BJ (cell line): ENCODE measurements at regions of chr6 and their contacts with region 1.

Region 1: DNA sequence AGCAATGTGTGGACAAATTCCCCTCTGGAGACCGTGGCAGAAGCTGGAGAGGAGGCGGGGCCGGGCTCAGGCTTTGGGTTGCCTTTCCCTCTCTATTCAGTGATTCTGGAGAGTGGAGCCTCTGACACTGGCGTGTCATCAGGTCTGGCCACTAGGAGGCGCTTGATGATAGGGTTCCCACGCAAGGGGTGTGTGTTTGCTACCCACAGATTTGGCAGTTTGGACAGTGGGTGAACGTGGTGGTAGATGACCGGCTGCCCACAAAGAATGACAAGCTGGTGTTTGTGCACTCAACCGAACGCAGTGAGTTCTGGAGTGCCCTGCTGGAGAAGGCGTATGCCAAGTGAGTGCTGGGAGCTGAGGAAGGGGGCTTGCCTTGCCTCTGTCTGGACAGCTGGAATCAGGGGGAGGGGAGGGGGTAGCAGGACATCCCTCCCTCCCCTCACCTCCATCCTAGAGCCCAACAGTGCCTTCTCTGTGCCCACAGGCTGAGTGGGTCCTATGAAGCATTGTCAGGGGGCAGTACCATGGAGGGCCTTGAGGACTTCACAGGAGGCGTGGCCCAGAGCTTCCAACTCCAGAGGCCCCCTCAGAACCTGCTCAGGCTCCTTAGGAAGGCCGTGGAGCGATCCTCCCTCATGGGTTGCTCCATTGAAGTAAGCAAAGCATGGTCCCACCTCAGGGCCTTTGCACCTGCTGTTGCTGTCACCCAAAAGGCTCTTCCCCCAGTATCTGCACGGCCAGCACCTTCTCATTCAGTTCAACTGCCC is 14.3 kb downstream of the CAPN11 start:
- DNase-seq: peak; percentile 12
- H3K4me3 ChIP-seq: no peak overlapping the region
- H3K27me3 ChIP-seq: peaks cover 3% of the 10 kb centered on the region; the same call in 1 of the 2 replicates
- CTCF ChIP-seq: peak; percentile 93

Region 2: DNA sequence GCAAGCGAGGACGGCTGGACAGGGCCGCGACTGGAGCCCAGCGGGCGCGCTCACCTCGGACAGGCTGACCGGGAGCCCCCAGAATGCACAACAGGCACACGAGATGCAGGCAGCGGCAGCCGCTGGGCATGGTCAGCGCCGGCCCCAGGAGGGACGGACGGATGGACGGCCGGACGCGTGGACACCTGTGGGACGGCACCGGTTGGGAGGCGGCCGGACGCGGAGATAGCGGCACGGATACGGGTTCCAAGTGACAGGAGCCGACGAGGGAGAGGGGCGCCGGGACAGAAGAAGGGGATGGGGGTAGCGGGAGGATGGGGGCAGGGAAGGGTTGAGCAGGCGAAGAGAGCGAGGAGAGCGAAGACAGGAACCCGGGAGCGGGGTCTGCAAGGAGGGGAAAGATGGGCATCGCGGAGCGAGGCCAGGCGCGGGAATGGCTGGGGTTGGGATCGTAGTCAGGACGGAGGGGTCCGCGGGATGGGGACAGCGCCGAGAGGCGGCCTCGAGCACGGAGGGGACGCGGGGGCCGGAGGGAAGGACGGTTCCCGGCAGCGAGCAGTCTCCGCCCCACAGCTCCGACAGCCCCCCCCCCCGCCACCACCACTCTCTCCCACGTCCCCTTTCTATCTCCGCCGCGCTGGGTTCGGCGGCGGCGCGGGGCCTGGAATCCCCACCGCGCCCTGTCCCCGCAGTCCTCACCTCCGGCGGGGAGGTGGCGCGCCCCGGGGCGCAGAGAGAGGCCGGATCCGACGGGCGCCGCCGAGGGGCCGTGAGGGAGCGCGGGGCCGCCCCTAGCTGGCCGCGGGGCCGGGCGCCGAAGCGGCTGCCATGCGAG is 718.0 kb before region 1 on chr6:
- CTCF ChIA-PET with region 1: no interaction called
- POLR2A ChIA-PET with region 1: interaction called, 14 read pairs
- DNase-seq: no peak
- H3K4me3 ChIP-seq: peak overlapping the region; percentile 62
- H3K27me3 ChIP-seq: 0 out of 2 replicates have a peak, but pooled peaks cover 2% of the 10 kb centered on the region
- CTCF ChIP-seq: no peak

Region 3: DNA sequence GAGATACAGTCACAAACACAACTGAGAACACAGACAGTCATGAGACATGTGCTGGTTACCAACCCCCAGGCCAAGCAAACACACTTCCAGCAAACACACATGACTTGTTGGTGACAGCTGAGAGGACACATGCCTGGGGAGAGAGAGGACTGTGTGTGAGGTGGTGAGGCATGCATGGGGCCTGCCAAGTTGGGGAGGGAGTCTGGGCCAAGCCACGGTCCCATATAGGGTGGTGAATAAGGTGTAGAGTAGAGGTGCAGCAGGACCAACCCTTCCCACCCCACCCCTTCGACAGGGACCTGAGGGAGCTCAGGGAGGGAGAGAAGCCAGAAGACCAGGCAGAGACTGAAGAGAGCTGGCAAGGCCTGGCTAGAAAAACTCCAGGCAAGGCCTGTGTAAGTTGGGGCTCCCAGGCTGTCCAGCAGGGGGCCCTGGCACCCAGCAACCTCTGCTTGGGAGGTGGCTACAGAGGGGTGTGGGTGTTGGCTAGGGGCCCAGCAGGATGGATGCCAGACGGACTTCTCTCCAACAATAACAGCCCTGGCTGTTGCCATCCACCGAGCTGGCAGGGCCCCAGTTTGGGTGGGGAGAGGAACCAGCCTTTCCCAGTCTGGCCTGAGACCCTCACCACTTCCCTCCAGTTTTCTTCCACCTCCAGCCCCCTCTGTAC is 48.5 kb after region 1 on chr6:
- CTCF ChIA-PET with region 1: interaction called, 10 read pairs
- POLR2A ChIA-PET with region 1: no interaction called
- DNase-seq: no peak
- H3K4me3 ChIP-seq: no peak overlapping the region
- H3K27me3 ChIP-seq: peaks cover 1% of the 10 kb centered on the region; the same call in 1 of the 2 replicates
- CTCF ChIP-seq: peak; percentile 91

Region 4: DNA sequence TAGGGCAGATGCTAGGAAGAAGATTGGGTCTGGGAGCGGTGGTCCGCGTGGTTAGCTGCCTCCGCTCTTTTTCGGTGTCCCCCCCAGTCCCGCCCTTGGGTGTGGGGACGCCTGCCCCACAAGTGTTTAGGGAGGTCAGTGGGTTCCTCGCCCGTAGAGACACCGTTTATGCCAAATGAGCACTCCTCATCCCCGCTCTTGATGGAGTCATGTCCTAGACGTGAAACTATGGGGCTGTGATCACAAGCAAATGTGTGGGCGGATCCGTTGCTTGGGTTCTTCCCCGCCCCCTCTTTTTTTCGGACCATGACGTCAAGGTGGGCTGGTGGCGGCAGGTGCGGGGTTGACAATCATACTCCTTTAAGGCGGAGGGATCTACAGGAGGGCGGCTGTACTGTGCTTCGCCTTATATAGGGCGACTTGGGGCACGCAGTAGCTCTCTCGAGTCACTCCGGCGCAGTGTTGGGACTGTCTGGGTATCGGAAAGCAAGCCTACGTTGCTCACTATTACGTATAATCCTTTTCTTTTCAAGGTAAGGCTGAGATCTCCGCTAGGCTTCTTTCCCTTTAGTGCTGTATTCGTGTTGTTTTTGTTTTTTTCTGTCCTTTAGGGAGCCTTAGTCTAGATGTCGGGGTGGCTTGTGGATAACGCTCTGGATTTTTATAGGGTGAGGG is 73.9 kb after region 1 on chr6 and contains the start of gene HSP90AB1:
- CTCF ChIA-PET with region 1: interaction called, 14 read pairs
- POLR2A ChIA-PET with region 1: no interaction called
- DNase-seq: peak; percentile 87
- H3K4me3 ChIP-seq: peak within 1 kb of the TSS; percentile 79
- H3K27me3 ChIP-seq: no peaks in the 10 kb centered on the region
- CTCF ChIP-seq: no peak
- polyA plus RNA-seq, gene HSP90AB1: 578 and 615 TPM in 2 replicates

Region 5: DNA sequence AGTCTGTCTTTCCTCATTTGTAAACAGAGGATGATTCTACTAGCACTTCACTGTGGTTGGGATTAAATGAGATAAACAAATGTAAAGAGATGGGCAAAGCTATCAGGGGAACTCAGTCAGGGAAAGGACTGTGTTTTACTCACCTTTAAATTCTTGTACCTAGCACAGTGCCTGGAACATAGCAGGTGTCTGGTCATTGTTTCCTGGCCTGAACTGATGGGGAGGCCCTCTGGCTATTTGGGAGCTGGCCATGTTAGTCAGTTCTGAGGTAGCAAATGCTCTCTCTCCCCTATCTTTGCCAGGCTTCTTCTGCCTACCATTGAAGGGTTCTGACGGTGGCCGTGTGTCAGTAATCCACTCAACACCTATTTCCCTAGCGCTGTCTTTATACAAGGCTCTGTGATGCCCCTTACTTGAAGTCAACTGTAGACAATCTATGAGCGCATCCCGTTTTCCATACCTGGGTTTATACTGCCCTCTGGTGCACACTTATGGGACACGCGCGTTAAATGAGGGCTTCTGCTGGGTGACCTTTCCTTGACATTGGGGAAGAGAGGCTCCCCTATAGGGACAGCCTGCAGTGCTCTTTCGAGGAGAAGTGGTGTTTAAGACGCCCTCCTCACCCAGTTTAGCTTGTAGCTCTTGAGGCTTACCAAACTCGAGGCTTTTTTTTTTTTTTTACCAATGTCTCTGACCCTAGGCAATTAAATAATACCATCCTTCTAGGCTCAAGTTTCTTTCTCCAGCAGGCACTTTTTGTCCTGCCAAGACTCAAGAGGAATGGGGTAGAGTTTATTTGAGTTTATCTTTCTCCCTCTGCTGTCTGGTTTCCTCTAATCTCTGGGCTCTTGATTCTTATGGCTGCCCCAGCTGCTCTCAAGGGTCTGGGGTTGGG is 165.6 kb after region 1 on chr6:
- CTCF ChIA-PET with region 1: interaction called, 10 read pairs
- POLR2A ChIA-PET with region 1: no interaction called
- DNase-seq: no peak
- H3K4me3 ChIP-seq: no peak overlapping the region
- H3K27me3 ChIP-seq: peaks cover 16% of the 10 kb centered on the region
- CTCF ChIP-seq: peak; percentile 71